Esophagus muscularis mucosa (tissue), 4 donors: ENCODE measurements at regions of chr14 and their contacts with region 1.

Region 1: GRCh38 chr14:73949744-73950734 is at the starts of genes COQ6 and FAM161B:
- DNase-seq: peak; percentile 98
- H3K4me3 ChIP-seq: peak within 1 kb of the TSS; percentile 89 to 98 (median 96)
- H3K27ac ChIP-seq: peak within 1 kb of the TSS; percentile 90 to 98 (median 96)
- H3K4me1 ChIP-seq: peaks cover 15 to 31% (median 24%) of the 10 kb centered on the region in 4 donors
- H3K27me3 ChIP-seq: no peaks in the 10 kb centered on the region
- CTCF ChIP-seq: peak in 1 of 3 experiments; percentile 12
- EP300 ChIP-seq: no peak
- POLR2A ChIP-seq: no peak
- total RNA-seq, gene COQ6: 21.5 to 52.0 (median 30.6) TPM
- total RNA-seq, gene FAM161B: 4.2 to 5.5 (median 4.6) TPM

Region 2: GRCh38 chr14:74018586-74019407 is 68.8 kb after region 1 on chr14 and contains the starts of genes BBOF1 and ENTPD5:
- intact Hi-C with region 1: loop called (anchors 5 kb)
- DNase-seq: peak; percentile 93
- H3K4me3 ChIP-seq: peak within 1 kb of the TSS; percentile 80 to 91 (median 86)
- H3K27ac ChIP-seq: peak within 1 kb of the TSS; percentile 95 to 99 (median 98)
- H3K4me1 ChIP-seq: peaks cover 11 to 23% (median 17%) of the 10 kb centered on the region in 4 donors
- H3K27me3 ChIP-seq: no peaks in the 10 kb centered on the region
- CTCF ChIP-seq: peak in 1 of 3 experiments; percentile 19
- EP300 ChIP-seq: no peak
- POLR2A ChIP-seq: peak; percentile 67
- total RNA-seq, gene BBOF1: 8.6 to 11.8 (median 9.9) TPM
- total RNA-seq, gene ENTPD5: 5.5 to 9.6 (median 6.0) TPM

Region 3: DNA sequence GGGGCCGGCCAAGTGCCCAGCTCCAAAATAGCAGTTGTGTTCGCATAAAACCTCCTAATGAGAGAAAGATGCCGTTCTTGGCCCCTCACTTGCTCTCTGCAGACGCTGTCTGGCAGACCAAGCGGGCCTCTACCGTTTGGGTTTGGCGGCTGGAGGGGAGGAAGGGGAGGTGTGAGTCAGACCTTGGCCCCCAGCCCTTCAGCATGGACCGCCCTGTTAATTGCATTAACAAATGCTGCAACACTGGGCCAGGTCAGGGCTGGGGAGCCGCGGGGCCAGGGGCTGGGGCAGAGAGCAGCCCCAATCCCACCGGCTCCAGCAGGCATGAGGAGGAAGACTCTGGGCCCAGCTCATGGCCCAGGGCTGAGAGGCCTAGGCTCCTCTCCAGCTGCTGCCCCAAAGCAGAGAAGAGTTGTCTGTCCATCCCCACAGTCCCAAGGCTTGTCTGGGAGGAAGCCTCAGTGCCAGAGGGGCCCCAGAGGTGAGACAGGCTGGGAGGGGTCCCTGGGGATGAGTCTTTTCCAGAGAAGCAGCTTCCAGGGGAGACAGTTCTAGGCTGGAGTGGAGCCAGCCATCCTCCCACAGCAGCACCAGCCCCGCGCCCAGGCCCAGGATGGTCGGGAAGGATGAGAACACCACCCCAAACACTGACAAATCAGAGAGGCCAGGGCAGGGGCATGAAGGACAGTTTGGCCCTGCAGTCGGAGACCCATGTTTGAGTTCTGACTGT is 645.1 kb after region 1 on chr14:
- intact Hi-C with region 1: no loop called
- DNase-seq: no peak
- H3K4me3 ChIP-seq: no peak overlapping the region
- H3K27ac ChIP-seq: peak overlapping the region; percentile 66 to 80 (median 74)
- H3K4me1 ChIP-seq: peaks cover 80 to 88% (median 84%) of the 10 kb centered on the region in 4 donors
- H3K27me3 ChIP-seq: no peaks in the 10 kb centered on the region
- CTCF ChIP-seq: no peak
- EP300 ChIP-seq: no peak
- POLR2A ChIP-seq: no peak